Activated CD4-positive, alpha-beta T cell treated with anti-CD3 and anti-CD28 coated beads for 36 hours (primary cell): ENCODE measurements at regions of chr16 and their contacts with region 1.

Region 1: DNA sequence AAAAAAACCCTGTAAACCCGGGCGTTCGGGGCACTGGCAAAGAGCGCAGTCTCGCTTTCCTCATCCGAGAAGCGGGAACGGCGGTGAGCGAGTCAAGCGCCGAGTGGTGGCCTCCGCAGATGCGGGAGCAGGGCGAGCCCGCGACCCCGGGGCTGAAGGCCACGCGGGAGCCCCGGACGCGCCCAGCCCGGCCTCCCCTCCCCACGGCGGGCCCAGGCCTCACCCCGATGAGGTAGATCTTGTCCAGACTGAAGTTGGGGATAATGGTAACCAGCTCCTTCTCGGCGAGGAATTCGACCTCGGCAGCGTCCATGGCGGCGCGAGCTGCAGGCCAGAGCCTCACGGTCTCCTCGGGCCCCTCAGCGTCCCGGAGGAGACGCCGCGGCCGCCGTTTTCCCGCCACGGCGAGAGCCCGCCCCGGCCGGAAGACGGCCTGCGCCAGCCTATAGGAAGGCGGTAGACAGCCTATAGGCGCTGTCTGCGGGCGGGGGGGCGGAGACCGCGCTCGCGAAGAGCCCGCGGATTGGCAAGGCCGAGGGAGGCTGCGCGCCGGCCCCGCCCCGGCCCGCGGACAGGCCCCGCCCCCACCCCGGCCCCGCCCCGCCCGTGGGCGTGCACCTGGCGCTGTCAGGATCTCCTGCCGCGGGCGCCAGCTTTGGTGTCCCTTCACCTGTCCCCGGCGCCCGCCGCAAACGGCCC is at the start of gene GINS2:
- DNase-seq: peak; percentile 96
- ATAC-seq: peak; percentile 100
- H3K4me3 Mint-ChIP-seq: peak within 1 kb of the TSS; percentile 88
- H3K27ac Mint-ChIP-seq: peak within 1 kb of the TSS; percentile 93
- H3K4me1 Mint-ChIP-seq: peaks cover 18% of the 10 kb centered on the region
- H3K27me3 Mint-ChIP-seq: peaks cover 4% of the 10 kb centered on the region
- total RNA-seq, gene GINS2: 86.4 to 87.5 TPM

Region 2: GRCh38 chr16:85750827-85751697 is 62.3 kb after region 1 on chr16 and contains the start of gene C16orf74:
- CTCF ChIA-PET with region 1: no interaction called
- POLR2A ChIA-PET with region 1: no interaction called
- intact Hi-C with region 1: loop called in 1 of 2 experiments (anchors 1 kb)
- DNase-seq: peak; percentile 36
- ATAC-seq: peak; percentile 83
- H3K4me3 Mint-ChIP-seq: peak within 1 kb of the TSS; percentile 57
- H3K27ac Mint-ChIP-seq: no peak within 1 kb of the TSS
- H3K4me1 Mint-ChIP-seq: peaks cover 8% of the 10 kb centered on the region
- H3K27me3 Mint-ChIP-seq: peaks cover 19% of the 10 kb centered on the region
- total RNA-seq, gene C16orf74: 0.23 to 0.25 TPM

Region 3: GRCh38 chr16:85799497-85800337 is 111.0 kb after region 1 on chr16 and contains the starts of genes COX4I1 and EMC8:
- CTCF ChIA-PET with region 1: no interaction called
- POLR2A ChIA-PET with region 1: no interaction called
- intact Hi-C with region 1: loop called in 1 of 2 experiments (anchors 1 kb)
- DNase-seq: peak; percentile 97
- ATAC-seq: peak; percentile 95
- H3K4me3 Mint-ChIP-seq: peak within 1 kb of the TSS; percentile 85
- H3K27ac Mint-ChIP-seq: peak within 1 kb of the TSS; percentile 89
- H3K4me1 Mint-ChIP-seq: peaks cover 60% of the 10 kb centered on the region
- H3K27me3 Mint-ChIP-seq: no peaks in the 10 kb centered on the region
- total RNA-seq, gene COX4I1: 374 to 508 TPM
- total RNA-seq, gene EMC8: 30.4 to 32.9 TPM

Region 4: DNA sequence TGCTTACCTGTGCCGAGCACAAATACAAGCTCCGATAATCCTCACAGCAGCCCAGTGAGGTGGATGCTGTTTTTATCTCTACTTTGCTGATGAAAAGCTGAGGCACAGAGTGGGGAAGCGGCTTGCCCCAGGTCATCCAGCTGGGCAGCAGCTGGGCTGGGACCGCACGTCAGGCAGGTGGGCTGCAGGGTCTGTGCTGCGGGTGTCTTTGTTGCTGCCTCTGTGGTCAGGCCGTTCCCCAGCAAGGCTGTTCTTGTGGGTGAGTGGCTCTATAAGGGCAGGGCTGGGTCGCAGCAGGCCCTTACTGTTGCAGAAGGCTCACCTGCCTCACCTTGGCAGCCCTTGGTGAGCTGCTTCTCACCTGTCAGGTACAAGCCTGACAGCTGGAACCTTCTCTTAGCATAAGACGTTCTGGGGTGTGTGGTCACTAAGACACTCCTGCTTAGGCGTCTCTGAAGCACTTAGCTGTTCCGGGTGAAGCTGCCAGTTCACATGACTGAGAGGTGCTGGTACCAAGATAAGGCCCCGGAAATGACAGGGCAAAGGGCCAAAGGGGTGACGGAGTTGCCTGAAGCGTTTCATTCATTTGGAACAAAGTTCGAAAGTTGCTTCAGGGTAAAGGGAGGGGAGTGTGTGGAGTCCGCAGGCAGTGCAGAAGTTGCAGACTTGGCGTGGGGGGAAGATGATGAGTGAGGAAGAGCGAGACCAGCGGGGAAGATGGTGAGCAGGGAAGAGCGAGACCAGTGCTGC is 227.6 kb after region 1 on chr16:
- CTCF ChIA-PET with region 1: no interaction called
- POLR2A ChIA-PET with region 1: no interaction called
- intact Hi-C with region 1: no loop called
- DNase-seq: no peak
- ATAC-seq: no peak
- H3K4me3 Mint-ChIP-seq: no peak overlapping the region
- H3K27ac Mint-ChIP-seq: peak overlapping the region; percentile 61
- H3K4me1 Mint-ChIP-seq: peaks cover 7% of the 10 kb centered on the region
- H3K27me3 Mint-ChIP-seq: no peaks in the 10 kb centered on the region